ENCODE measurements at regions of chr16 and their contacts with region 1.

Region 1: DNA sequence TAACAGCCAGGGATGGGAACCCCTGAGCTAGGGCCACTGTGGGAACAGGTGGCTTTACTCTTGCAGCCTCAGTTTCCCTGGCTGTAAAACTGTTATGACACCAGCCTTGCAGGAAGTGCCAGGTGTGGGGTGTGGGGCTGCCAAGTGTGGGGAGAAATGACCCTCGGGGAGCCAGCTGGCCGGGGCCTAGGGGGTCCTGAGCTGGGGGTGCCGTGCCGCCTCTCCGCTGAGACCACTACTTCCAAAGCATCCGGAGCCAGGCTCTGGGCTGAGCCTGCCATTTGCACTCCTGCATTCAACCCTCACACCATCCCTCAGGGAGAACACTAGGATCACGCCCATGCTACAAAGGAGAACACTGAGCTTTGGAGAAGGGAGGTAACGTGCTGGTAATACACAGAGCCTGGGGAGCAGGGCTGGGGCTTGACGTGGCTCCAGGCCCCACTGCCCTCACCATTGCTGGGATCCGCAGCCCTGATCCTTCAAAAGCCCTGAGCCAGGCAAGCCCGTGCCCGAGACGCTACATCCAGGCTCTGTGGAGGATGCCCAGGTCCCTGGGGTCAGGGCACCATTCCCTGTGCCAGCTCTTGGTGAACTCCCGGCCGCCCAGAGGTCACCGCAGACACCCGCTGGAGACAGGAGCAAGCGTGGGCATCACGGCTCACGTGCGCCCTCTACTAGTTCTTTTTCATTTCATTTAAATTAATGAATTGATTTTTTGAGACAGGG is 28.8 kb upstream of the GINS2 start:
- DNase-seq: peak; percentile 72
- H3K4me3 Mint-ChIP-seq: no peak overlapping the region
- H3K27ac Mint-ChIP-seq: no peak overlapping the region
- H3K4me1 Mint-ChIP-seq: peaks cover 5% of the 10 kb centered on the region
- H3K27me3 Mint-ChIP-seq: peaks cover 42% of the 10 kb centered on the region

Region 2: GRCh38 chr16:85659805-85660495 is 57.6 kb before region 1 on chr16:
- CTCF ChIA-PET with region 1: interaction called, 44 read pairs
- DNase-seq: peak; percentile 80
- H3K4me3 Mint-ChIP-seq: no peak overlapping the region
- H3K27ac Mint-ChIP-seq: peak overlapping the region; percentile 19
- H3K4me1 Mint-ChIP-seq: no peaks in the 10 kb centered on the region
- H3K27me3 Mint-ChIP-seq: no peaks in the 10 kb centered on the region

Region 3: GRCh38 chr16:85750827-85751697 is 33.5 kb after region 1 on chr16 and contains the start of gene C16orf74:
- CTCF ChIA-PET with region 1: no interaction called
- DNase-seq: peak; percentile 30
- H3K4me3 Mint-ChIP-seq: peak within 1 kb of the TSS; percentile 66
- H3K27ac Mint-ChIP-seq: no peak within 1 kb of the TSS
- H3K4me1 Mint-ChIP-seq: peaks cover 11% of the 10 kb centered on the region
- H3K27me3 Mint-ChIP-seq: peaks cover 80% of the 10 kb centered on the region